HCT116 (cell line): ENCODE measurements at regions of chr17 and their contacts with region 1.

Region 1: DNA sequence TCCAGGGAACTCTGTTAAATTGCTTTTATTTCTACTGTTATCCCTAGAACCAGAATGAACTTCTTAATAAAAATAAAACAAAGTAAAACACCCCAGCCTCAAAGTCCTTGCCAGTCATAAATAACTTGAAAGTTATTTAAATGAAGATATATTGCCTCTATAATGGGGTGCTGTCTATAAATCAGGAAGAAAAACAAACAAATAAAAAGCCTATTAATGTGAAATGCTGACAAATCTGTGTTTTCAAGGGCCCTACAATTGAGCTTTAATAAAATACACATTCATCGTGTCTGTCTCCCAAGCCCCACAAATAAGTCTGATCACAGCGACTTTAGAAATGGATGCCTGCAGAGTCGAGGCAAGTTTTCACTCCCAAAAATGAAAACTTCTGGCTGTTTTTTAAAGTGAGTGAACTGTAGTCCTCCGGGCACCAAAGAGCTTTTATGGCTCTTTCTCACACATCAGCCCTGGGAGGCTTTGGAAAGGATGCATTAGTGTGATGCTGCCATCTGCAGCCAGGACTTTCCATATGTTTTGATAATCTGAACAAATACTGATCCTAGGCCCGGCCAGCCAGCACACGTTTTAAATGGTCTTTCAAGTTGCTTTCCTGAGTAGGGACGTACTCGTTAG is 16.4 kb downstream of the NACA2 start:
- DNase-seq: peak; percentile 74
- ATAC-seq: peak; percentile 92
- H3K4me3 ChIP-seq: peak overlapping the region in 1 of 2 experiments; percentile 6; a peak in 2 of 4 replicates
- H3K27ac ChIP-seq: peak overlapping the region; percentile 66
- H3K4me1 ChIP-seq: peaks cover 28 to 41% of the 10 kb centered on the region in 2 experiments
- H3K27me3 ChIP-seq: no peaks in the 10 kb centered on the region
- CTCF ChIP-seq: peak; percentile 57 to 89 (median 67)
- POLR2A ChIP-seq: no peak
- RAD21 ChIP-seq: peak; percentile 96

Region 2: DNA sequence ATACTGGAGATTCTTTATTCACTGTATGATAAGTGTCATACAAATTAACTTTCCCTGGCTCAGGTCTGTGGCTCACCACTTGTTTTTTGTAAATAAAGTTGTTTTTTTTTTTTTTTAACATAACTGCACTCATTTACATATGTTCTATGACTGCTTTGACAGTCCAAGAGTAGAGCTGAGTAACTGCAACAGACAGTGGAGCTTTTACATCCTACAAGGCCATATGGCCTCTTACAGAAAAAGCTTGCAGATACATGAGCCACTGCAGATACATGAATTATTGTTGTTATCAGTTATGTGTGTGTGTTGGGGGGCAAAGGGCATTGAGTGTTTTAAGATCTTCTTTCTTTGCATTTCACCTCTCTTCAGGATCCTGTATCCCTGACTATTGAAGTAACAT is 585.3 kb before region 1 on chr17:
- CTCF ChIA-PET with region 1: no interaction called
- POLR2A ChIA-PET with region 1: no interaction called
- RAD21 ChIA-PET with region 1: no interaction called
- intact Hi-C with region 1: loop called (anchors 5 kb)
- DNase-seq: no peak
- ATAC-seq: no peak
- H3K4me3 ChIP-seq: no peak overlapping the region
- H3K27ac ChIP-seq: no peak overlapping the region
- H3K4me1 ChIP-seq: no peaks in the 10 kb centered on the region
- H3K27me3 ChIP-seq: no peaks in the 10 kb centered on the region
- CTCF ChIP-seq: no peak
- POLR2A ChIP-seq: no peak
- RAD21 ChIP-seq: no peak

Region 3: GRCh38 chr17:61426013-61426730 is 148.5 kb before region 1 on chr17:
- CTCF ChIA-PET with region 1: interaction called, 17 read pairs
- POLR2A ChIA-PET with region 1: no interaction called
- RAD21 ChIA-PET with region 1: no interaction called
- intact Hi-C with region 1: no loop called
- DNase-seq: peak; percentile 63
- ATAC-seq: peak; percentile 72
- H3K4me3 ChIP-seq: no peak overlapping the region
- H3K27ac ChIP-seq: peak overlapping the region; percentile 89
- H3K4me1 ChIP-seq: peaks cover 37 to 42% of the 10 kb centered on the region in 2 experiments
- H3K27me3 ChIP-seq: no peaks in the 10 kb centered on the region
- CTCF ChIP-seq: peak; percentile 58 to 86 (median 64)
- POLR2A ChIP-seq: no peak
- RAD21 ChIP-seq: peak; percentile 92